ENCODE measurements at regions of chr5 and their contacts with region 1.

Region 1: DNA sequence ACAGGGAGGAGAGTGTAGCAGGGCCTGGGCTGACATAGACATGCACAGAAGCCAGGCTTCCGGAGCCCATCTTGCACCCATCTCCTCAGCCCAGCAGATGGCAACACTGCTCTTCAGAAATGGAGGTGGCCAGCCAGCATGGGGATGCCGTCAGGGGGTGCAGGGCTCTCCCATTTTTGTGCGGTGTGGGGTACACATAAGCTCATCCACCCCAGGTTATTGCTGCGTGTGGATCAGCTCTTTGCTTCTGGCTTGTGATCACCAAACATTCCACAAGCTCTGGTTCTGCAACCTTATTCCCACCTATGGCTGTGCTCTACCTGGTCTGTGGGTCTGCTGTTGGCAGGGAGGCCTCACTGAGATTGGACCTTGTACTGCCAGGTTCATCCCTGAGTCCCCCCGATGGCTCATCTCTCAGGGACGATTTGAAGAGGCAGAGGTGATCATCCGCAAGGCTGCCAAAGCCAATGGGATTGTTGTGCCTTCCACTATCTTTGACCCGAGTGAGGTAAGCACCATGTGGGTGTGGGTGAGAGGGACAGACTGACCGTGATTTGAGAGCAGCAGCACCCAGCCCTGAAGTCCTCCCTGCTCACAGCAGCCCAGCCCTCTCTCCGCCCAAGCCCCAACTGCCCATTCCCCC is 17.3 kb downstream of the SLC22A5 start:
- DNase-seq: peak; percentile 64 to 89 (median 75)
- ATAC-seq: peak; percentile 95
- H3K4me3 ChIP-seq: no peak overlapping the region
- H3K4me3 Mint-ChIP-seq: no peak overlapping the region
- H3K27ac ChIP-seq: no peak overlapping the region
- H3K27ac Mint-ChIP-seq: no peak overlapping the region
- H3K4me1 ChIP-seq: peaks cover 19% of the 10 kb centered on the region
- H3K4me1 Mint-ChIP-seq: peaks cover 20% of the 10 kb centered on the region
- H3K27me3 ChIP-seq: no peaks in the 10 kb centered on the region
- H3K27me3 Mint-ChIP-seq: no peaks in the 10 kb centered on the region
- CTCF ChIP-seq: peak; percentile 82

Region 2: DNA sequence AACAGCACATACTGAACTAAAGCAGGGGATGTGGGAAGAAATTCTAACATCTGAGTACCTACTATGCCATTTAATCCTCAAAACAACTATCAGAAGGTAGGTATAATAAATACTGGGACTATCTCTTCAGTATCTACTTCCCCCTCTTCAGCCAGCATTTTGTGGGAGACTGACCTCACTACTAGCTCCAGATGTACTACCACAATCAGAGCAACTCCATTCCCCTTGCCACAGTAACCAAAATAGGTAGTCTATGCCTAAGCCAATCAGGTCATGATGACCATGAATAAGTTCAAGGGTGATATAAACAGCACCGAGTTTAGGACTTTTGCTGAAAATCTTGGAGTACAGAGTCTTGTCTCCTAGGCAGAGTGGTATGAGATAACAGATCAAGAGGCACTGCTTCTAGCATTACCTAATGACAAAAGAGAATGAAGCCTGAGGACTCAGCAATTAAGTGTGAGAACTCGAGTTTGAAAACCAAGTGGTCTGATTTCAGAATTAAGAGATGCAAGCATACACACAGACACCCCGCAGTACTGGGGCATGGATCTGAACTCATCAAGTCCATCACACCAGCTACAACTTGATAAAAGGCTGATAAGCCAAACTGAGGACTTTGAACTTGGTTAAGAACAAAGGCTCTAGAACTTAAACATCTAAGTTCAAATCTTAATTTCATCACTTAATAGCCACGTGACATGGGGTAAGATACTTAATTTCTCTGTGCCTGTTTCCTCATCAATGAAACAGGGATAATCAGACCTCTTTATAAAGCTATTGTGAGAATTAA is 599.7 kb before region 1 on chr5:
- CTCF ChIA-PET with region 1: no interaction called
- POLR2A ChIA-PET with region 1: no interaction called
- intact Hi-C with region 1: no loop called
- DNase-seq: no peak
- ATAC-seq: no peak
- H3K4me3 ChIP-seq: no peak overlapping the region
- H3K4me3 Mint-ChIP-seq: no peak overlapping the region
- H3K27ac ChIP-seq: no peak overlapping the region
- H3K27ac Mint-ChIP-seq: no peak overlapping the region
- H3K4me1 ChIP-seq: peaks cover 10% of the 10 kb centered on the region
- H3K4me1 Mint-ChIP-seq: peaks cover 54% of the 10 kb centered on the region
- H3K27me3 ChIP-seq: no peaks in the 10 kb centered on the region
- H3K27me3 Mint-ChIP-seq: no peaks in the 10 kb centered on the region
- CTCF ChIP-seq: no peak

Region 3: DNA sequence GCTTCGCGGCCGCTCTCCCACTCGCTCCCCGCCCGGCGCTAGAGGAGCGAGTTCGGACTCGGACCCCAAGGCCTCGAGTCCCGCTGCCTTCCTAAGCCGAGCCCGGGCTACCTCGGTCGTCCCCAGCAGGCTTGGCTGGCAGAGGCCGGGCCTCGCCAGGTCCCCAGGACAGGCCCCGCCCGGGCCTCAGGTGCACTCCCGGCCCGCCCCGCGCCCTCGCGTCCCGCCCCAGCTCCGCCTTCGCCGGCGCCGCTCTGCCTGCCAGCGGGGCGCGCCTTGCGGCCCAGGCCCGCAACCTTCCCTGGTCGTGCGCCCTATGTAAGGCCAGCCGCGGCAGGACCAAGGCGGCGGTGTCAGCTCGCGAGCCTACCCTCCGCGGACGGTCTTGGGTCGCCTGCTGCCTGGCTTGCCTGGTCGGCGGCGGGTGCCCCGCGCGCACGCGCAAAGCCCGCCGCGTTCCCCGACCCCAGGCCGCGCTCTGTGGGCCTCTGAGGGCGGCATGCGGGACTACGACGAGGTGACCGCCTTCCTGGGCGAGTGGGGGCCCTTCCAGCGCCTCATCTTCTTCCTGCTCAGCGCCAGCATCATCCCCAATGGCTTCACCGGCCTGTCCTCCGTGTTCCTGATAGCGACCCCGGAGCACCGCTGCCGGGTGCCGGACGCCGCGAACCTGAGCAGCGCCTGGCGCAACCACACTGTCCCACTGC is 17.1 kb before region 1 on chr5 and contains the start of gene SLC22A5:
- CTCF ChIA-PET with region 1: interaction called, 23 read pairs
- POLR2A ChIA-PET with region 1: no interaction called
- intact Hi-C with region 1: no loop called
- DNase-seq: peak; percentile 44 to 84 (median 68)
- ATAC-seq: peak; percentile 94
- H3K4me3 ChIP-seq: peak within 1 kb of the TSS; percentile 68 to 78
- H3K4me3 Mint-ChIP-seq: peak within 1 kb of the TSS; percentile 81
- H3K27ac ChIP-seq: peak within 1 kb of the TSS; percentile 68 to 77
- H3K27ac Mint-ChIP-seq: peak within 1 kb of the TSS; percentile 84
- H3K4me1 ChIP-seq: peaks cover 15% of the 10 kb centered on the region
- H3K4me1 Mint-ChIP-seq: peaks cover 31% of the 10 kb centered on the region
- H3K27me3 ChIP-seq: no peaks in the 10 kb centered on the region
- H3K27me3 Mint-ChIP-seq: no peaks in the 10 kb centered on the region
- CTCF ChIP-seq: no peak
- total RNA-seq, gene SLC22A5: 4.5 to 5.3 TPM

Region 4: GRCh38 chr5:132426525-132427138 is 39.9 kb after region 1 on chr5:
- CTCF ChIA-PET with region 1: interaction called, 17 read pairs
- POLR2A ChIA-PET with region 1: no interaction called
- intact Hi-C with region 1: no loop called
- DNase-seq: peak in 8 of 9 experiments; percentile 52 to 85 (median 66)
- ATAC-seq: peak; percentile 13
- H3K4me3 ChIP-seq: peak overlapping the region; percentile 17 to 31
- H3K4me3 Mint-ChIP-seq: peak overlapping the region; percentile 71
- H3K27ac ChIP-seq: peak overlapping the region; percentile 77 to 98
- H3K27ac Mint-ChIP-seq: peak overlapping the region; percentile 97
- H3K4me1 ChIP-seq: peaks cover 99% of the 10 kb centered on the region
- H3K4me1 Mint-ChIP-seq: peaks cover 95% of the 10 kb centered on the region
- H3K27me3 ChIP-seq: no peaks in the 10 kb centered on the region
- H3K27me3 Mint-ChIP-seq: no peaks in the 10 kb centered on the region
- CTCF ChIP-seq: no peak

Region 5: GRCh38 chr5:132490486-132491367 is 104.0 kb after region 1 on chr5 and contains the start of gene IRF1:
- CTCF ChIA-PET with region 1: interaction called, 425 read pairs
- POLR2A ChIA-PET with region 1: interaction called, 6 read pairs
- intact Hi-C with region 1: no loop called
- DNase-seq: peak; percentile 94 to 99 (median 97)
- ATAC-seq: peak; percentile 74
- H3K4me3 ChIP-seq: peak within 1 kb of the TSS; percentile 90 to 96
- H3K4me3 Mint-ChIP-seq: peak within 1 kb of the TSS; percentile 96
- H3K27ac ChIP-seq: peak within 1 kb of the TSS; percentile 95 to 98
- H3K27ac Mint-ChIP-seq: peak within 1 kb of the TSS; percentile 97
- H3K4me1 ChIP-seq: peaks cover 75% of the 10 kb centered on the region
- H3K4me1 Mint-ChIP-seq: peaks cover 75% of the 10 kb centered on the region
- H3K27me3 ChIP-seq: no peaks in the 10 kb centered on the region
- H3K27me3 Mint-ChIP-seq: no peaks in the 10 kb centered on the region
- CTCF ChIP-seq: no peak
- total RNA-seq, gene IRF1: 1,214 to 1,250 TPM

Region 6: DNA sequence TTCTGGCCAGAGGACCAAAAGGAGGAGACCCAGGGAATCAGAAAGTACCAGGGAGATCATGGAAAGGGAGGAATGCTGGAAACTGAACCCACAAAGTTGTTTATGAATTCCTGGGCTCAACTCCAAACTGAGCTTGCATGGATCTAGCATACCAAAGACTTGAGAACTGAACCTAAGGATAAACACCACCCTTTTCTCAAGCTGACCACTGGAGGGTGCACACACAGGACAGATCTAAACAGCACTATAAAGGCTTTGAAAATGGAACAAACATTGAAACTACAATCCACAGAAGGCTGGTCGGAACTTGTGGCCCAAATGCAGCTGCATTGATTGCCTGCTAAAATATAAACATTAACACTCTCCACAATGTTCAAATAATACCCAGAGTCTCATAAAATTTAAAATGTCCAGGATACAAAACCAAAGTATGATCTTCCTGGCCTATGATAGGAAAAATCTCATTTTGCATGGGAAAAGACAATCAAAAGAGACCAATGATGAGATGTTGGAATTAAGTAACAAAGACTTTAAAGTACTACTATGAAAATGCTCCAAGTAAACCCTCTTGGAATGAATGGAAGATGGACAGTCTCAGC is 119.4 kb after region 1 on chr5:
- CTCF ChIA-PET with region 1: interaction called, 425 read pairs
- POLR2A ChIA-PET with region 1: interaction called, 7 read pairs
- intact Hi-C with region 1: loop called (anchors 1 kb)
- DNase-seq: peak in 1 of 9 experiments; percentile 22
- ATAC-seq: peak; percentile 43
- H3K4me3 ChIP-seq: no peak overlapping the region
- H3K4me3 Mint-ChIP-seq: no peak overlapping the region
- H3K27ac ChIP-seq: no peak overlapping the region
- H3K27ac Mint-ChIP-seq: no peak overlapping the region
- H3K4me1 ChIP-seq: peaks cover 5% of the 10 kb centered on the region
- H3K4me1 Mint-ChIP-seq: peaks cover 2% of the 10 kb centered on the region
- H3K27me3 ChIP-seq: no peaks in the 10 kb centered on the region
- H3K27me3 Mint-ChIP-seq: peaks cover 21% of the 10 kb centered on the region
- CTCF ChIP-seq: no peak

Region 7: DNA sequence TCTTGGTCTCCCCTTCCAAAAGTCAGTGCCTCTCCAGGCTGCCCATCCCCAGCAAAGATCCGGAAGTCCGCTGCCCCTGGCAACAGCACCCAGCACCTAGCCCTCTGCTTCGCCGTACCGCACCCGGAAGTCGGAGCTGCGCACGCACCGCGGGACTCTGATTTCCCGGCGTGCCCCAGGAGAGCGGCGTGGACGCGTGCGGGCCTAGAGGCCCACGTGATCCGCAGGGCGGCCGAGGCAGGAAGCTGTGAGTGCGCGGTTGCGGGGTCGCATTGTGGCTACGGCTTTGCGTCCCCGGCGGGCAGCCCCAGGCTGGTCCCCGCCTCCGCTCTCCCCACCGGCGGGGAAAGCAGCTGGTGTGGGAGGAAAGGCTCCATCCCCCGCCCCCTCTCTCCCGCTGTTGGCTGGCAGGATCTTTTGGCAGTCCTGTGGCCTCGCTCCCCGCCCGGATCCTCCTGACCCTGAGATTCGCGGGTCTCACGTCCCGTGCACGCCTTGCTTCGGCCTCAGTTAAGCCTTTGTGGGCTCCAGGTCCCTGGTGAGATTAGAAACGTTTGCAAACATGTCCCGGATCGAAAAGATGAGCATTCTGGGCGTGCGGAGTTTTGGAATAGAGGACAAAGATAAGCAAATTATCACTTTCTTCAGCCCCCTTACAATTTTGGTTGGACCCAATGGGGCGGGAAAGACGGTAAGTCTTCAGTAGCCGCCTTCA is 170.2 kb after region 1 on chr5 and contains the start of gene RAD50:
- CTCF ChIA-PET with region 1: no interaction called
- POLR2A ChIA-PET with region 1: no interaction called
- intact Hi-C with region 1: no loop called
- DNase-seq: peak; percentile 83 to 96 (median 91)
- ATAC-seq: peak; percentile 95
- H3K4me3 ChIP-seq: peak within 1 kb of the TSS; percentile 62 to 97
- H3K4me3 Mint-ChIP-seq: peak within 1 kb of the TSS; percentile 98
- H3K27ac ChIP-seq: peak within 1 kb of the TSS; percentile 68 to 91
- H3K27ac Mint-ChIP-seq: peak within 1 kb of the TSS; percentile 98
- H3K4me1 ChIP-seq: peaks cover 21% of the 10 kb centered on the region
- H3K4me1 Mint-ChIP-seq: peaks cover 28% of the 10 kb centered on the region
- H3K27me3 ChIP-seq: no peaks in the 10 kb centered on the region
- H3K27me3 Mint-ChIP-seq: no peaks in the 10 kb centered on the region
- CTCF ChIP-seq: no peak
- total RNA-seq, gene RAD50: 8.0 to 8.7 TPM

Region 8: DNA sequence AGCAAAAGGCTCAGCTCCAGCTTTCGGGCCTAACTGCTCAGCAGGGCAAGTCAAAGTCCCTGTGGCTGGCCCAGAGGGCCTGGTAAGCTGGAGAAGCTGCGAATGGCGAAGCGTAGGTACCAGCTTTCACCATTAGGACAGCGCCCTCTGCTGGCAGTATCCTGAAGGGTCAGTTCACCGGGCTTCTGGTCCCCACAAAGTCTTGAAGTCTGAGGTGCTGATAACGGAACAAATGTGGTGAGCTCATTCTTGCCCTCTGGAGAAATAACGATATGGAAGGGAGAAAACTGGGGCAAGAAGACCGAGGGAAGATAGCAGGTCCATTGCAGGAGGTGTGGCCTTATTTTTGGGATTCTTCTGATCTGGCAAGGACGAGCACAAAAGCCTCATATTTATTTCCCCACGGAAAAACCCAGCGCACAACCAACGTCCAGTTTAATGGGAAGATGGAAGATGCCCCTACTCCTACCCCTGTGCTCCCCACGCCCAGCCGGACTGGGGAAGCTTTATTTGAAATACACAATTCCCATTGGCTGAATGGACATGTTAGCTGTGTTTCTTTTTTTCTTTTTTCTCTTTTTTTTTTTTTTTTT is 433.5 kb after region 1 on chr5:
- CTCF ChIA-PET with region 1: interaction called, 22 read pairs
- POLR2A ChIA-PET with region 1: no interaction called
- intact Hi-C with region 1: loop called (anchors 1 kb)
- DNase-seq: peak; percentile 74 to 93 (median 87)
- ATAC-seq: peak; percentile 85
- H3K4me3 ChIP-seq: peak overlapping the region in 1 of 2 experiments; percentile 35
- H3K4me3 Mint-ChIP-seq: peak overlapping the region; percentile 40
- H3K27ac ChIP-seq: no peak overlapping the region
- H3K27ac Mint-ChIP-seq: no peak overlapping the region
- H3K4me1 ChIP-seq: peaks cover 16% of the 10 kb centered on the region
- H3K4me1 Mint-ChIP-seq: peaks cover 11% of the 10 kb centered on the region
- H3K27me3 ChIP-seq: peaks cover 10 to 14% of the 10 kb centered on the region in 2 experiments
- H3K27me3 Mint-ChIP-seq: peaks cover 36% of the 10 kb centered on the region
- CTCF ChIP-seq: peak; percentile 89